Upper lobe of right lung (tissue), 1 donor: ENCODE measurements at regions of chr5 and their contacts with region 1.

Region 1: GRCh38 chr5:75511435-75512384 is at the starts of genes CERT1 and POLK:
- DNase-seq: peak; percentile 99
- ATAC-seq: peak; percentile 98
- H3K4me3 ChIP-seq: peak within 1 kb of the TSS; percentile 84
- H3K27ac ChIP-seq: peak within 1 kb of the TSS; percentile 92
- H3K4me1 ChIP-seq: peaks cover 38% of the 10 kb centered on the region
- H3K27me3 ChIP-seq: no peaks in the 10 kb centered on the region
- CTCF ChIP-seq: no peak
- total RNA-seq, gene CERT1: 60.7 TPM
- total RNA-seq, gene POLK: 38.2 TPM

Region 2: DNA sequence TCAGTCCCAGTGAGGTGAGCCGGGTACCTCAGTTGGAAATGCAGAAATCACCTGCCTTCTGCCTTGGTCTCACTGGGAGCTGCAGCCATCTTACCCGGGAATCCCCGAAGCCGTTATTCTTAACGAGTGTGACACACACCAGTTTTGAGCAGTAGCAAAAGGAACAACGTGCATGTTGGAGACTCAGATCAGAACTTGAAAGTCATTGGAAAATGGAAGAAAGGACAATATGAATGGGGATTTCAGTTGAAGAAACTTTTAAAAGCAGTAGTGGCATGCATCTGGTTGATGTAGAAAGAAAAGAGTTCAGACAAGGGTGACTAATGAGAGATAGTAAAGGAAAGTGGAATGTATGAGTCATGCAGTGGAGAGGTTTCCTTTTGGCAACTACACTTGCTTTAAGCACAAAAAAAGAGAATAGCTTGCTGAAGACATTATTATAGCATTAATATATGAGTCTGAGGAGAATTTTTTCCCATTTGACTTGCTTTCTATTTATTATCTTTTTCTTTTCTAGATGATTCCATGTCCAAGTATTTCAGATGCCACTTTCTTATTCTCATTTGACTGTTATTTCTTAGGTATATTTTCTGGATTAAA is 55.1 kb after region 1 on chr5:
- intact Hi-C with region 1: loop called (anchors 10 kb)
- DNase-seq: no peak
- ATAC-seq: peak; percentile 91
- H3K4me3 ChIP-seq: no peak overlapping the region
- H3K27ac ChIP-seq: peak overlapping the region; percentile 53
- H3K4me1 ChIP-seq: peaks cover 32% of the 10 kb centered on the region
- H3K27me3 ChIP-seq: no peaks in the 10 kb centered on the region
- CTCF ChIP-seq: no peak